PC-3 (cell line): ENCODE measurements at regions of chr3 and their contacts with region 1.

Region 1: GRCh38 chr3:8416965-8417364 is 84.7 kb upstream of the LMCD1 start:
- DNase-seq: peak; percentile 60
- ATAC-seq: peak; percentile 81
- H3K4me3 ChIP-seq: peak overlapping the region; percentile 11; the same call in 1 of the 2 replicates
- H3K27ac ChIP-seq: no peak overlapping the region
- H3K4me1 ChIP-seq: no peaks in the 10 kb centered on the region
- H3K27me3 ChIP-seq: no peaks in the 10 kb centered on the region
- CTCF ChIP-seq: no peak

Region 2: DNA sequence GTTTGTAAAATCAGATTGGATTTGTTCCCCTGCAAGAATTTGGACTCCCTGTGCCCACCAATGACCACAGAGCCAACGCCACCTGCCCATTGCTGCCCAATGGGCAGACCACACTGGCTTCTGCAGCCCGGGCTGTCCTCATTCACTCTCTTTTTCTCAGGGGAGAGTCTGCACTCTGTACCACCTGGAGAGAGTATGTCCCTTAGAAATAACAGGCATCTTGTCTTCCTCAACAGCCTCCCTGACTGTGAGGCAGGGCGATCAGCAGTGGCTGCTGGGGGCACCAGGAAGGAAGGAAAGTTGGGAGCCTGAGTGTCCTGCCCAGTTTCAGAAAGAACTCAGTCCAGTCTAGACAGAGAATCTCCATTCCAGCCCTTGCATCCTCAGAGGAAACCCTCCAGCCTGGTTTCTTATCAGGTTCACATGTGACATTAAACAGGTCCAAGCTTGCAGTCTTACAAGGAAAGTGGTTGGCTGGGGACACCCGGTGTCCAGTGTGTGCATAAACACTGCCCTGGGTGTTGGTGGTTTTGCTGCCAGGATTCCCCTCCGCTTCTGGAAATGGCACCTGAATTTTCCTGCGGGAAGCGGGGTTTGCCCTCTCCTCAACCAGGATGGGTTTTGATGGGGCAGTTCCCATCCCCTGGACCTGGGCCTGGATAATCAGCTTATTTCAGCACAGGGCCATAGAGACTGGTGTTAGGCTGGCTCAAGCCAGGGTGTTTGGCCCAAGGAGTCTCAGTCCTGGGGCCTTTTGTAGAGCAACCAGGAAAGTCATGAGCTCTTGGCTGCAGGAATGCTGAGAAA is 190.5 kb after region 1 on chr3:
- CTCF ChIA-PET with region 1: no interaction called
- POLR2A ChIA-PET with region 1: no interaction called
- intact Hi-C with region 1: loop called (anchors 5 kb)
- DNase-seq: peak; percentile 74
- ATAC-seq: peak; percentile 95
- H3K4me3 ChIP-seq: no peak overlapping the region
- H3K27ac ChIP-seq: no peak overlapping the region
- H3K4me1 ChIP-seq: 0 out of 2 replicates have a peak, but pooled peaks cover 6% of the 10 kb centered on the region
- H3K27me3 ChIP-seq: no peaks in the 10 kb centered on the region
- CTCF ChIP-seq: peak; percentile 80